Thyroid gland (tissue), 4 donors: ENCODE measurements at regions of chr19 and their contacts with region 1.

Region 1: DNA sequence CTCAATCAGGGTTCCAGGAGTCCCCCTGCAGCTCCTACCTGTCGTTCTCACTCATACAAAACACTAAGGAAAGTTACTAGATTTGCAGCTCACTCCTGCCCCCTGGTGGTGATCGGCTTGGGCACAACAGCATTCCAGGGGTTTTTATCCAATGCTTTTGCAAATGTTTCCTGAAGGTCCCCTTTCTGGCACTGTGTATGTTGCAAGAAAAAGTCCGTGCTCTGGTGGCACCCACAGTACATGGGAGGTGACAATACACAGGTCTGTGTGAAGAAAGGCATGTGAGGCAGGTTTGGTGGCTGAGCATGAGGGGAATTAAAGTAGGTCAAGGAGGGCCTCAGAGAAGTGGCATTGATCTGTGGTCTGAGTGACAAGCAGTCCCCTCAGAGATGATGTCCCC is 8.6 kb upstream of the TYK2 start:
- DNase-seq: peak; percentile 89 to 93
- H3K4me3 ChIP-seq: no peak overlapping the region
- H3K27ac ChIP-seq: no peak overlapping the region
- H3K4me1 ChIP-seq: peaks cover 4 to 5% of the 10 kb centered on the region in 2 donors
- H3K27me3 ChIP-seq: no peaks in the 10 kb centered on the region
- CTCF ChIP-seq: peak; percentile 80 to 96 (median 90)
- POLR2A ChIP-seq: no peak

Region 2: DNA sequence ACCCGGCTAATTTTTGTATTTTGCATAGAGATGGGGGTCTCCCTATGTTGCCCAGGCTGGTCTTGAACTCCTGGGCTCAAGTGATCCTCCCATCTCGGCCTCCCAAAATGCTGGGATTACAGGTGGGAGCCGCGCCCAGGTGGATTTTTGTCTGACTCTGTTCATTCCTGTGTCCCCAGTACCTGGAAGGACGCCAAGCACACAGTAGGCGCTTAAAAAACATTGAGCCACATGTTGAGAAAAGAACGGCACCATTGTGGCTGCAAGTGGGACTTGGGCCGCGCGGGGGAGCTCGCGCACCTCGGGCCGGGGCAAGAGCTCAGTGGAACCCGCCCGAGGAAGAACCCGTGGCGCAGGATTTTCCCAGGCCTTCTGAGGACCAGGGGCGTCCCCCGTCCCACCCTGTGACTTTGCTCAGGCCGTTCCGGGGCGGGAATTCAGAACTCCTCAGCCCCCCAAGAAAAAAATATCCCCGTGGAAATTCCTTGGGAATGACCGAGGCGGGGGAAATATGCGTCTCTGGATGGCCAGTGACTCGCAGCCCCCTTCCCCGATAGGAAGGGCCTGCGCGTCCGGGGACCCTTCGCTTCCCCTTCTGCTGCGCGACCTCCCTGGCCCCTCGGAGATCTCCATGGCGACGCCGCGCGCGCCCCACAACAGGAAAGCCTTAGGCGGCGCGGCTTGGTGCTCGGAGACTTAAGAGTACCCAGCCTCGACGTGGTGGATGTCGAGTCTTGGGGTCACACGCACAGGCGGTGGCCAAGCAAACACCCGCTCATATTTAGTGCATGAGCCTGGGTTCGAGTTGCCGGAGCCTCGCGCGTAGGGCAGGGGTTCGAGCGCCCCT is 119.4 kb before region 1 on chr19:
- intact Hi-C with region 1: loop called (anchors 2 kb)
- DNase-seq: peak; percentile 77 to 81
- H3K4me3 ChIP-seq: peak overlapping the region in 1 of 3 donors; percentile 32
- H3K27ac ChIP-seq: peak overlapping the region; percentile 65 to 88 (median 79)
- H3K4me1 ChIP-seq: peaks cover 10 to 24% of the 10 kb centered on the region in 2 donors
- H3K27me3 ChIP-seq: no peaks in the 10 kb centered on the region
- CTCF ChIP-seq: peak; percentile 70 to 96 (median 90)
- POLR2A ChIP-seq: no peak